MCF 10A (cell line): ENCODE measurements at regions of chr1 and their contacts with region 1.

Region 1: DNA sequence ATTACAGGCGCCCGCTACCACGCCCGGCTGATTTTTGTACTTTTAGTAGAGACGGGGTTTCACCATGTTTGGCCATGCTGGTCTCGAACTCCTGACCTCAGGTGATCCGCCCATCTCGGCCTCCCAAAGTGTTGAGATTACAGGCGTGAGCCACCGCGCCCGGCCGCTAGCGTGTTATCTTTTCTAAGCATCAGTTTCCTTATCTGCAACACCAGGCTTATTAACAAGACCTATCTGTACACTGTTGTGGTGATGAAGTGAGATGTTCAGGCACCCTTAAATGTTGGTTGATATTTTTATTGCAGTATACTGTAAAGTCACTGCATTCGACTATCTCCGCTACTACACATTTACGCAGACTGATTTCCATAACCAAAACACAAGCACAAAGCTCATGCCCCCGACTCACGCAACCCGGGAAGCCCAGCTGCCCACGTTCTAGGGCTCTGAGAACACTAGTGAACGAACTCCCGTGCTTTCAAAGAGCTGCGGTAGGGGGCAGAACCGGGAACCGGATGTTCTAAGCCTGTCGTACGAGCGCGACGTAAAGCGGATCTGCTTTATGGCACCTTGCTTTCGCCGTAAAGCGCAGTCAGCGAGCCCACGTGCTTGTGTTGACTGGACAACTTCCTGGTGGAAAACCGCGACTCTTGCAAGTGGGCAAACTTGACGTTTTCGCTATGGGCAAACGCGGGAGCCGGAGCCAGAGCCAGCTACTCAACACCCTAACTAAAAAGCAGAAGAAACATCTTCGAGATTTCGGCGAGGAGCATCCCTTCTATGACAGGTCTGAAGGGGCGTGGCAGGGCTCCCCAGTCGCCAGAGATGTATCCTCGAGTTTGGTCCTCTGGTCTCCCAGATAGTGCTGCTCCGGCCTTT is at the start of gene UTP25:
- DNase-seq: peak; percentile 99
- H3K4me3 Mint-ChIP-seq: peak within 1 kb of the TSS; percentile 92
- H3K27ac Mint-ChIP-seq: peak within 1 kb of the TSS; percentile 89
- H3K4me1 Mint-ChIP-seq: peaks cover 65% of the 10 kb centered on the region
- H3K27me3 Mint-ChIP-seq: no peaks in the 10 kb centered on the region
- CTCF ChIP-seq: peak; percentile 88
- total RNA-seq, gene UTP25: 20.4 and 23.8 TPM in 2 replicates

Region 2: GRCh38 chr1:209389258-209389657 is 438.4 kb before region 1 on chr1:
- CTCF ChIA-PET with region 1: no interaction called
- POLR2A ChIA-PET with region 1: no interaction called
- intact Hi-C with region 1: no loop called
- DNase-seq: peak; percentile 99
- H3K4me3 Mint-ChIP-seq: peak overlapping the region; percentile 22
- H3K27ac Mint-ChIP-seq: peak overlapping the region; percentile 79
- H3K4me1 Mint-ChIP-seq: peaks cover 45% of the 10 kb centered on the region
- H3K27me3 Mint-ChIP-seq: no peaks in the 10 kb centered on the region
- CTCF ChIP-seq: no peak

Region 3: DNA sequence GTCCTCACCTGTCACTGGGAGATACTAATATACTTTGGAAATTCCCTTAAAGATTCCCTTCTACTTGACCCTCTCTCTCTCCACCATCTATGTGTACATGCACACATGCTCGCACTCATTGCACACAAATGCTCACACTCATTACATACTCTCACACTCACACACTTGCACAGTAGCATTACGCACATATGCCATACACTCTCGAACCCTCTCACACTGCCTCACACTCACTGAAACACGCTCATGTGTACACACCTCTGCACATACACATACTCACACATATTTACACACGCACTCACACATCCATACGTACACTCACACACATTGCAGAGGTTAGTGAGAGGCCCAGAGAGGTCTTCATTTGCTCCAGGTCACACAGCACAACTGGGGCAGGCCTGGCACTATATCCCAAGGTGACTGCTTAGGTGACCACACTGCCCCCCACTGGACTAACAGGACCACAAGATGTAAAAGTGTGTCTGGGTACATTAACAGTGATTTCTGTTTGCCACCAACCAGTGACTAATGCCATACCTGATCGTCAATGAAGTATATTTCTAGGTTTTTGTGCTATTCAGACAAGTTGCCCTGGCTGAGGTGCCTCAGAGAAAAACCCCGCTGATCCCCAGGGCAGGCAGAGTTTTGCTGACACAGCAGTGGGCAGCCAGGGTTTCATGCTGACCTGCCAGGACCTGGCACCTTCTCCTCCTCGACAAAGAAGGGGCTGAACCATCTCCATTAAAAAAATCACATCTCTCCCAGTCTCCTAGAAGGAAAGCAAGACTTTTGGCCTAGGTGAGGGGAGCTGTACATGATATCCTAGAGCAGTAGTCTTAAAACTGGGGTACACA is 272.6 kb before region 1 on chr1:
- CTCF ChIA-PET with region 1: no interaction called
- POLR2A ChIA-PET with region 1: no interaction called
- intact Hi-C with region 1: no loop called
- DNase-seq: no peak
- H3K4me3 Mint-ChIP-seq: no peak overlapping the region
- H3K27ac Mint-ChIP-seq: no peak overlapping the region
- H3K4me1 Mint-ChIP-seq: peaks cover 13% of the 10 kb centered on the region
- H3K27me3 Mint-ChIP-seq: no peaks in the 10 kb centered on the region
- CTCF ChIP-seq: peak; percentile 23

Region 4: DNA sequence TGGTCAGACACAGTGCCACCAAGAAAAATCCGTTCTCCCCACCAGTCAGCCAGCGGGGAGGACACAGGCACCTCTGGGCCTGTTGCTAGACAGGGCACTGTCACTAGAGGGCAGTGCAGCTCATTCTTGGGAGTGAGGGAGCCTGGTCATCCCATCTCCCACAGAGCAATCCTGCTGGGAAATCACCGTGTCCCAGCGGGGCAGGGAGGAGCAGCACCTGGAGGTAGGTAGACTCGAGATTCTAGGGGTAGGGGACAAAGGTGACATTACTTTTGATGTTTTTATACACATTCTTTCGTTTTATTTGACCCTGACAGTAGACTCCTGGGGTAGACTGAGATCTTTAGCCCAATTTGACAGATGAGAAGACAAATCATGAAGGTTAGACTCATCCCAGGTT is 250.8 kb before region 1 on chr1:
- CTCF ChIA-PET with region 1: interaction called, 12 read pairs
- POLR2A ChIA-PET with region 1: no interaction called
- intact Hi-C with region 1: no loop called
- DNase-seq: peak; percentile 97
- H3K4me3 Mint-ChIP-seq: no peak overlapping the region
- H3K27ac Mint-ChIP-seq: no peak overlapping the region
- H3K4me1 Mint-ChIP-seq: peaks cover 8% of the 10 kb centered on the region
- H3K27me3 Mint-ChIP-seq: peaks cover 19% of the 10 kb centered on the region
- CTCF ChIP-seq: peak; percentile 100

Region 5: DNA sequence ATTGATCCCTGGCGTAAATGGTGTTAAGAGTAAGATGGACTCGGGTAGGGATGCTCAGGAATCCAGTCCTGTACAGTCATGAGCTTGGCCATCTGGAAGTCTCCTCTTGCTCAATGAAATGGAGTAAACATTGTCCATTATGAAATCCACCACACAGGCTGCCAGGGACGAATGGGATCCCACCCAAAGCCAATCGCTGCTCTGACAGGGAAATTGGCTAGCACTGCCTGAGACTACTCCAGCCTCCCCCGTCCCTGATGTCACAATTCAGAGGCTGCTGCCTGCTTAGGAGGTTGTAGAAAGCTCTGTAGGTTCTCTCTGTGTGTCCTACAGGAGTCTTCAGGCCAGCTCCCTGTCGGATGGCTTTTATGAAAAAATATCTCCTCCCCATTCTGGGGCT is 123.0 kb before region 1 on chr1 and contains the start of gene HSD11B1:
- CTCF ChIA-PET with region 1: no interaction called
- POLR2A ChIA-PET with region 1: no interaction called
- intact Hi-C with region 1: no loop called
- DNase-seq: peak; percentile 94
- H3K4me3 Mint-ChIP-seq: no peak within 1 kb of the TSS
- H3K27ac Mint-ChIP-seq: no peak within 1 kb of the TSS
- H3K4me1 Mint-ChIP-seq: peaks cover 7% of the 10 kb centered on the region
- H3K27me3 Mint-ChIP-seq: no peaks in the 10 kb centered on the region
- CTCF ChIP-seq: no peak
- total RNA-seq, gene HSD11B1: 0.21 and 0.39 TPM in 2 replicates

Region 6: DNA sequence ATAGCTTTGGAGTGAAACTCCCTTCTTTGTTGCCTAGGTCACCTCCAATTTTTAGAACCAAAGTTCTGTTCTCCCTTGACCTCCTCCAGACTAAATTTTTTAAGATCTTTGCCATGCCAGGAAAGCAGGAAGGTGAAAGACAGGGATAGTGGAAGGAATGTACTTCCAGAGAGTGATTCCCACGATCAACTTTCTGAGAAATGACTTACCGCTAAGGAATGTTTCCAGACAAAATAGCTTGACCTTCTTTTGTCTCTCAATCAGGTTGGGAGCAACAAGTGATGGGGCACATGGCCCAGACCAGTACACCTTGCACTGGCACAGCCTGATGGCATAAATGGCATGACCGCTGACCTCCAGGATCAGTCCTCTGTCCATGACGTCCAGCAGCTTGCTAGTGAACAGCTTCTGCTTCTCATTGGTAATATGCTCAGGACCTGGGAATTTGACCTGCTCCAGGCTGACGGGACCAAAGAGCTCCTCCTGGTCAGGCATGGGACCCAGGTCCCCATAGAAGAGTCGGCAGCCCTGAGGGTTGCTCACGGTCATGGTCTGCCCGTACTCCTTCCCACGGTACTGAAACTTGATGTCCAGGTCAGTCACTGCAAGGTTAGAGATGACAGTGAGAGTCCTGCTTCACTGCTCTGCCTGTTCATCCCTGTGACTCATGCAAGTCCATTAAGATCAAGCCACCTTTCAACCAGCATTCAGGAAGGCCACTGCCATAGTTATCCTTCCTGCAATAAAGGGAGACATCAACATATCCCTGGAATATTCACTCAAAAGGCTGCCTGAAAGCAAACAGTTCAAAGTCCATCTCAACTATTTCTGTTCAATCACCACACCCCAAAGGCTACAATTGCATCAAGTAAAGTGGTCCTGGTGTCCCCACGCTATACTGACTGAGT is 37.1 kb before region 1 on chr1:
- CTCF ChIA-PET with region 1: interaction called, 263 read pairs
- POLR2A ChIA-PET with region 1: interaction called, 49 read pairs
- intact Hi-C with region 1: loop called (anchors 2 kb)
- DNase-seq: peak; percentile 32
- H3K4me3 Mint-ChIP-seq: no peak overlapping the region
- H3K27ac Mint-ChIP-seq: no peak overlapping the region
- H3K4me1 Mint-ChIP-seq: peaks cover 6% of the 10 kb centered on the region
- H3K27me3 Mint-ChIP-seq: no peaks in the 10 kb centered on the region
- CTCF ChIP-seq: no peak

Region 7: DNA sequence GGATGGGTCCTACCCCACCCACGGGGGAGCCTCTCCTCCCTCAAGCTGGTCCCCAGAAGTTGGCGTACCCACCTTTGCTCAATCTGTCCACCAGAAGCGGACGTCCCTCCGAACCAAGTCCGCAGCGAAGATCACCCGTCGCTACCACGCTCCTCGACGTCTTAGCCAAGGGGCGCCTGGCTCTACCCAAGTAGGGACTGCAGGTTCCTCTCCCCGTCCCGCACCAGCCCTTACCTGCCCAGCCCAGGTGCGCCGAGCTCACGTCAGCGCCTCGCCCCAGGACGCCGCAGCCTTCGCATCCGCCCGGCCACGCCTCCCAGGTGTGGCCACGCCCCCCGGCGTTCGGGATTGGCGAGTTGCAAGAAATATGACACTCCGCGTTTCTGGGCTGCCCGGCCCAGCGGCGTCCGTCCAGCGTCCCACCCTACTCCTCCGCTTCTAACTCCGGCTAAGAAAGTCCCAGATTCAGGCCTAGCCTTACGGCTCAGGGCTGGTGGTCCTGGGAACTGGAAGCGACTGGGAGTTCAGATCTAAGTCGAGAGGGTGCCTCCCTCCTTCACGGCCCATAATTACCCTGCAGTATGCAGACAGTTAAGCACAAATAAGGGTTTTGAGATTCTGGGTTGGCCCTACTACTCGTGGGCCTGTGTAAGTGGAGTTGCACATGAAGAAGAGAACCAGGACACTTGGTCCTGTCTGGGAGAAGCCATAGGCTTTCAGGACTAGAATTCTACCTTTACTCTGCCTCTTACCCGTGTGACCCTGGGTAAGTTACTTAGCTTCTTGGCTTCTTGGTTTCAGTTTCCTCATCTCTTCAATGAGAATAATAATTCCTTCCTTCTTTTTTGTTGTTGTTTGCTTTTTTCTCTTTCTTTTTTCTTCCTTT is 21.5 kb before region 1 on chr1 and contains the start of gene IRF6:
- CTCF ChIA-PET with region 1: interaction called, 1,144 read pairs
- POLR2A ChIA-PET with region 1: interaction called, 1,382 read pairs
- intact Hi-C with region 1: loop called (anchors 1 kb)
- DNase-seq: peak; percentile 99
- H3K4me3 Mint-ChIP-seq: peak within 1 kb of the TSS; percentile 90
- H3K27ac Mint-ChIP-seq: peak within 1 kb of the TSS; percentile 92
- H3K4me1 Mint-ChIP-seq: peaks cover 74% of the 10 kb centered on the region
- H3K27me3 Mint-ChIP-seq: no peaks in the 10 kb centered on the region
- CTCF ChIP-seq: no peak
- total RNA-seq, gene IRF6: 87.8 and 106 TPM in 2 replicates

Region 8: DNA sequence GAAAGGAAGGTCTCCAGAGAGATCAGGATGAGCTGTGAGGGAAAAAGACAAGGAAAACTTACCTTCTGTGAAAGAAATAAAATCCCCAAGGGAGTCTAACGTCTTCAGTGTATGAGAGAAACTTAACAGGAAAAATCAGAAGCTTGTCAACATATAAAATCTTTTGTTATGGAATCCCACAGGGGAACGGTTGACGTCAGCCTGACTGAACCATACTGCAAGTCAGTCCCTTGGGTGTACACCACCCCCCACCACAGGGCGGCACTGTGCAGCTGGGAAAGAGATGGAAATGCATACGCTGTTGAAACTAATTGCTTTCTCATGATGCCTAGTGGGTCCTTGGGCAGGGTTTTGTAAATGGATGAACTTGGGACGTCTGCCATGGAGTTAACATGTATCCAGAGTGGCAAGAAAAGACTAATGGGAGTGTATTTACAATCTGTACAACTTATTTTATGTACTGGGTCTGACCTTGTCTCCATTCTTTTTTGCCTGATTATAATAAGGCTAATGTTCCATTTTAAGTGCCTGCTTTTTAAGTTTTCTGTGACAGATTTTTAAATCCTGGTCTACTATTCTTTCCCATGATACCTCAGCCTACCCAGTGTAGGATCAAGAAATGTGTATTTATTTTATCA is 22.8 kb after region 1 on chr1:
- CTCF ChIA-PET with region 1: interaction called, 117 read pairs
- POLR2A ChIA-PET with region 1: interaction called, 7 read pairs
- intact Hi-C with region 1: loop called (anchors 1 kb)
- DNase-seq: peak; percentile 80
- H3K4me3 Mint-ChIP-seq: no peak overlapping the region
- H3K27ac Mint-ChIP-seq: peak overlapping the region; percentile 47
- H3K4me1 Mint-ChIP-seq: peaks cover 26% of the 10 kb centered on the region
- H3K27me3 Mint-ChIP-seq: no peaks in the 10 kb centered on the region
- CTCF ChIP-seq: peak; percentile 92

Region 9: GRCh38 chr1:209875515-209875914 is 47.9 kb after region 1 on chr1:
- CTCF ChIA-PET with region 1: interaction called, 21 read pairs
- POLR2A ChIA-PET with region 1: interaction called, 8 read pairs
- intact Hi-C with region 1: no loop called
- DNase-seq: peak; percentile 83
- H3K4me3 Mint-ChIP-seq: no peak overlapping the region
- H3K27ac Mint-ChIP-seq: peak overlapping the region; percentile 98
- H3K4me1 Mint-ChIP-seq: peaks cover 89% of the 10 kb centered on the region
- H3K27me3 Mint-ChIP-seq: no peaks in the 10 kb centered on the region
- CTCF ChIP-seq: peak; percentile 33

Region 10: GRCh38 chr1:209989525-209989924 is 161.9 kb after region 1 on chr1:
- CTCF ChIA-PET with region 1: interaction called, 41 read pairs
- POLR2A ChIA-PET with region 1: interaction called, 3 read pairs
- intact Hi-C with region 1: no loop called
- DNase-seq: peak; percentile 42
- H3K4me3 Mint-ChIP-seq: no peak overlapping the region
- H3K27ac Mint-ChIP-seq: peak overlapping the region; percentile 70
- H3K4me1 Mint-ChIP-seq: peaks cover 16% of the 10 kb centered on the region
- H3K27me3 Mint-ChIP-seq: peaks cover 15% of the 10 kb centered on the region
- CTCF ChIP-seq: peak; percentile 74

Region 11: DNA sequence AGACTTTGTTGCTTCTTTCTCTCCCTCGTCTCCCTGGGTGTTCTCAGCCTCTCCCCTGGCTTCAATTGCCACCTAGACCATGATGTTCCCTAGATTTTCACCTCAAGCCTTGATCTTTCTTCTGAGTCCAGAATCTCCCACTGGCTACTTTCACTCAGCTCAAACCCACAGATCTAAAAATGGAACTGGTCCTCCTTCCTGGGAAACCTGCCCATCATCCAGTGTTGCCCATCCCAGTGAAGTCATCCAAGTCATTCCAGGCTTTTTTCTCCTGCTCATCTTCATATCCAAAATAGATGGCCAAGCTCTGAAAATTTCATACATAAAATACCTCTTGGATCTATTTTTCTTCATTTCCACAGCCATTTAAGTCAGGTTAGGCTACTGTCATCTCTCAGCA is 958.9 kb after region 1 on chr1:
- CTCF ChIA-PET with region 1: no interaction called
- POLR2A ChIA-PET with region 1: no interaction called
- intact Hi-C with region 1: no loop called
- DNase-seq: no peak
- H3K4me3 Mint-ChIP-seq: no peak overlapping the region
- H3K27ac Mint-ChIP-seq: no peak overlapping the region
- H3K4me1 Mint-ChIP-seq: no peaks in the 10 kb centered on the region
- H3K27me3 Mint-ChIP-seq: peaks cover 32% of the 10 kb centered on the region
- CTCF ChIP-seq: no peak